SK-N-SH (cell line): ENCODE measurements at regions of chr5 and their contacts with region 1.

Region 1: GRCh38 chr5:55159763-55160492 is at the start of gene GPX8:
- DNase-seq: peak; percentile 26
- H3K4me3 ChIP-seq: peak within 1 kb of the TSS; percentile 60 to 94; a peak in 3 of 4 replicates
- H3K27ac ChIP-seq: peak within 1 kb of the TSS; percentile 80 to 93
- H3K4me1 ChIP-seq: peaks cover 0 to 11% of the 10 kb centered on the region in 2 experiments; a peak in 1 of 4 replicates
- H3K27me3 ChIP-seq: no peaks in the 10 kb centered on the region
- CTCF ChIP-seq: peak; percentile 92
- EP300 ChIP-seq: no peak
- RAD21 ChIP-seq: peak; percentile 66
- polyA plus RNA-seq, gene GPX8: 30.1 and 44.2 TPM in 2 replicates

Region 2: GRCh38 chr5:54257366-54258118 is 902.4 kb before region 1 on chr5:
- CTCF ChIA-PET with region 1: no interaction called
- POLR2A ChIA-PET with region 1: no interaction called
- DNase-seq: no peak
- H3K4me3 ChIP-seq: no peak overlapping the region
- H3K27ac ChIP-seq: no peak overlapping the region
- H3K4me1 ChIP-seq: no peaks in the 10 kb centered on the region
- H3K27me3 ChIP-seq: no peaks in the 10 kb centered on the region
- CTCF ChIP-seq: no peak
- EP300 ChIP-seq: no peak
- RAD21 ChIP-seq: no peak

Region 3: DNA sequence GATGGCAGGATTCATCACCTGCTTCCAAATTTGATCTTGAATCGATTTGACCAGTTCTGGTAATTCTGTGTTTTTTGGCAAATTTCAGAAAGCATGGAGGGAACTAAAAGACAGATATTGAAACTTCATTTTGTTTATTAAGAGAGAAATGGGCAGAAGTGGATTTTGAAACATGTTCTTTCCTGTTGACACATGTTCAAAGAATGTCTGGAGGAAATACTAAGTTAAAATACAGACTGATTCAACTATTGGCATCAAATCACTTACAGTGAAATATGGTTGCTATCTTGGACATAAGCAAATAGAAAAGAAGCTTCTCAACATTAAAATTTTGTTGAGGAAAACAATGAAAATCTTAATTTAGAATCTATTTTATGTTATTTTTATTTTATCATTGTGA is 155.2 kb before region 1 on chr5:
- CTCF ChIA-PET with region 1: no interaction called
- POLR2A ChIA-PET with region 1: no interaction called
- DNase-seq: no peak
- H3K4me3 ChIP-seq: no peak overlapping the region
- H3K27ac ChIP-seq: peak overlapping the region in 1 of 2 experiments; percentile 56; a peak in 3 of 4 replicates
- H3K4me1 ChIP-seq: peaks cover 0 to 5% of the 10 kb centered on the region in 2 experiments; a peak in 1 of 4 replicates
- H3K27me3 ChIP-seq: no peaks in the 10 kb centered on the region
- CTCF ChIP-seq: no peak
- EP300 ChIP-seq: 0 out of 4 replicates have a peak, but pooled peaks of 1 of the 2 experiments have one; percentile 11
- RAD21 ChIP-seq: no peak

Region 4: DNA sequence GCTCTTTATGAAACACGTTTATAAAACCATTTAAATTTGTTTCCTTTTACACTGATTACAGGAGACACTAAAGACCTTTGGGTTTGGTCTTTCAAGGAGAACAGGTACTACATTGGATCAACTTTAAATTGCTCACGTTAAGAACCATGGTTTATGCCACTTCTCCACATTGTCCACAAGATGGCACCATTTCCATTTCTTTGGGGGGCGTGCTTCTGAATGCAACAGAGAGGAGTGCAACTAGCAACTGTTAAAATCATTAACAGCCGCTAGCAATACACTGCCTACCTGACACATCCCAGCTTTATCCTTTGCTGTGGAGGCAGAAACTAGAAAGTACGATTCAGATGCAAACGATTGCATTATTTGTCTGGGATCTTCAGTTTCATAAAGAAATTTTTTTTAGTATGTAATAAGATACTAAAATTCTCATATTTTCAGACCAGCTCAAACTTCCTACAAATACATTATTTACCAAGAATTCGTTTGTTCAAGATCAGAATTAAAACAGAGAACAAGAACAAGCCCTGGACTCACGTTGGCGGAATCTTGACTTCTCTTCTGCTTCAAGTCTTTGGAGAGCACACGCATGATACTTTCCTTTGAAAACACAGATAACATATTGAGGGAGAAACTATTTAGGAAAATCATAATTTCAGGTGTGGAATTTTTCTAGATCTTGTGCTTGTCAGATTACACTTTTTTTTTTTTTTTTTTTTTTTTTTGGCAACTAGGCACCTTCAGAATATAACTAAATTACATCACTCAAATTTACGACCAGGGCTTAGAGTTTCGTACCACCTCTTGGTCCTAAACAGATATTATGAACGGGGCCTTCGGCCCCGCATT is 12.3 kb after region 1 on chr5:
- CTCF ChIA-PET with region 1: interaction called, 11 read pairs
- POLR2A ChIA-PET with region 1: no interaction called
- DNase-seq: peak; percentile 79
- H3K4me3 ChIP-seq: peak overlapping the region; percentile 51 to 59
- H3K27ac ChIP-seq: no peak overlapping the region
- H3K4me1 ChIP-seq: peaks cover 3 to 13% of the 10 kb centered on the region in 2 experiments; a peak in 3 of 4 replicates
- H3K27me3 ChIP-seq: peaks cover 37% of the 10 kb centered on the region
- CTCF ChIP-seq: peak; percentile 86
- EP300 ChIP-seq: no peak
- RAD21 ChIP-seq: peak; percentile 91

Region 5: DNA sequence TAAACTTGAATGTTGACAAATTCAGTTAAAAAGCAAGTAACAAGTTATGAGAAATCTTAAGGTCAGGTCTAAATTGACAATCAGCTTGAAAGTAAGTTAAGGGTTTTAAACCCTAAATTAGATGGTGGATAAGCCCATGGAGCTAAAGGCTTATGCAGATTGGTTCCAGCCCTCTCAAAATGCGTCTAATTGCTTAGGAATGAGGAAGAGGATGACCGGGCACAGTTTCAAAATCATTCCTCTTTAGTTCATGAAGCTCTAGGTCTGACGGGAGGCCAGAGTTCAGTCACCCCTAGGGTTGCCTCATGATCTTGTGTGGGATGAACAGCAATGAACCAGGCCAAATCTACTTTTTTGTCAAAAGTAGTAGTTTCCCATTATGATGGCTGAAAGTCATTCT is 476.8 kb after region 1 on chr5:
- CTCF ChIA-PET with region 1: no interaction called
- POLR2A ChIA-PET with region 1: no interaction called
- DNase-seq: no peak
- H3K4me3 ChIP-seq: no peak overlapping the region
- H3K27ac ChIP-seq: peak overlapping the region; percentile 26 to 72; a peak in 3 of 4 replicates
- H3K4me1 ChIP-seq: peaks cover 8 to 17% of the 10 kb centered on the region in 2 experiments
- H3K27me3 ChIP-seq: no peaks in the 10 kb centered on the region
- CTCF ChIP-seq: no peak
- EP300 ChIP-seq: no peak
- RAD21 ChIP-seq: no peak